Left colon (tissue), 2 donors: ENCODE measurements at regions of chr16 and their contacts with region 1.

Region 1: DNA sequence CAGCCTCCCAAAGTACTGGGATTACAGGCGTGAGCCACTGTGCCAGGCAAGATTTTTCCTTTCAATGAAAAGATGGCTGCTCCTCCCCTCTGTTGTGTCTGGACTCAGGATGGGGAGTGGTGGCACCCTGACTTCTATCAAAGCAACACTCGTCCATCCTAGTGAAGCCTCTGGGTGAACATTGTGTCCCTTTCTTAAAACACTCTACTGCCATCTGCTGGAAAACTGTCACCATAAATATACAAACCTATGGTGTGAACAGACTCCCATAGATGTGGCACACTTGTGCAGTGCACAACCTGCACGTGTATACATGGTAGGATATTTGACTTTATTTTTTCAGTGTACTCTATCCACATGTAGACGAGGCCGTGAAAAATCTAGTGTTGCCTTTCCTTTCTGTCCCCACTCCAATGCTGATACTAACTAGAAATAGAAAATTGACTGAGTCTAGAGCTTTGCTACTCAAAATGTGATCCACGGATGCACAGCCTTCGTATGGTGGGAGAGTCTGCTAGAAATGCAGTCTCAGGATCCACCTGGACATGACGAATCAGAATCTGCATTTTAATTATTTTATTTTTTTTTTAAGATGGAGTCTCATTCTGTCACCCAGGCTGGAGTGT is 55.9 kb upstream of the PLCG2 start:
- DNase-seq: no peak
- ATAC-seq: peak; percentile 94

Region 2: DNA sequence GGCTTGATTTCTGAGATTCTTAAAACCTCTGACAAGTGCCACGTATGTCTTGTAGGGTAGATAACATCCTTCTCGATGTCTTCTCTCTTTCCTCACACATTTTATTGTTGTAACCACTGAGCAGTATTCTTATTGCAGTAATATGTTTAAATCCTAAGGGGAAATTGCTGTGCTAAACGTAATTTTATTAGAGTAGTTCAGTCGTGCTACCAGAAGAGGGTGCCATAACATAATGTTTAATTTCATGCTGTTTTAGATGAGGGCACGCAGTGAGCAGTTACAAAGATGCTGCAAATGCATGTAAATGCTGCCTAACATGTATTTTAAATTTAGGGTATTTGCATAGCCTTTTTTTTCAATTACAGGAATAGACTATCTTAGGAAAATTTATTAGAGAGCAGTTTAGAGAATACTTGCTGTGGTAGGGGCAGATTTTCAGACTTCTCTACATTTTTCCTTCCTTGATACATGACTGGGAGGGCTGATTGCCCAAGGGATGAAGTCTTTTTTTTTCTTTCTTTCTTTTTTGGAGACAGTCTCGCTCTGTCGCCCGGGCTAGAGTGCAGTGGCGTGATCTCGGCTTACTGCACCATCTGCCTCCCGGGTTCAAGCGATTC is 356.8 kb before region 1 on chr16:
- intact Hi-C with region 1: loop called in 1 of 2 experiments (anchors 10 kb)
- DNase-seq: no peak
- ATAC-seq: peak; percentile 67

Region 3: DNA sequence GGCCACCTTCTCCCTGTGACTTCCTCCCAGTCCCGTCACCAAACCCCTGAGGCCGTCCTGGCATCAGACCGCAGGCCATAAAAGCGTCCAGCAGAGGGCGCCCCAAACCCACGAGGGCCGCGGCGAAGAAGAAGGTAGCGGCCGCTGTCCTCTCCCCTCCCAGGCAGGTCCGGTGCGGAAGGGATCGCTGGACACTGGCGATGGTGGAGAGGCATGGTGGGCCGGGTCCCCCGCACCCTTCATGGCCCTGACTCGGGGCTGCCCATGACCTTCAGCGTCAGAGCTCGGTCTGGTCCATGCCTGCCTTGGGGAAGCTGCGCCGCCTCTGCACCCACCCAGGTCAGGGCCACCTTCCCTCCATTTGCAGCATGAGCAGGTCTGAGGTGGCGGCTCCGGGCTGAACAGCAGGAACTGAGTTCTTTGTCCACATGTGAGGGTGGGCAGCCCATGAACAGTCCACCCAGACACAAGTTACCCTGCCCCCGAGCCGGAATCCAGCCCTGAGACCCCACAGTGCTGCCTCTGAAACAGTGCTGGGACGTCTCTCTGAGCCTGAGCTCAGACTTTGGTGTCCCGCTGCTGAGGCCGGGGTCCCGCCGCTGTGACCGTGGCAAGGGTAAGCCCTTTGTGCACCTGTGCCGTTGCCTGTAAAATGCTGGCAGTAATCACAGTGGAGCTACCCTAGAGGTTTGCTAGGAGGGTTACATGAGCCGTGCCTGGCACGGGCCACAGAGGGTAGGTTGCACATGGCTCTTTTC is 319.4 kb before region 1 on chr16:
- intact Hi-C with region 1: loop called (anchors 5 to 10 kb)
- DNase-seq: peak; percentile 73 to 94
- ATAC-seq: peak; percentile 95

Region 4: GRCh38 chr16:81623363-81624102 is 99.7 kb before region 1 on chr16:
- intact Hi-C with region 1: loop called in 1 of 2 experiments (anchors 10 kb)
- DNase-seq: peak in 1 of 2 donors; percentile 52
- ATAC-seq: peak; percentile 35